Panc1 (cell line): ENCODE measurements at regions of chr6 and their contacts with region 1.

Region 1: DNA sequence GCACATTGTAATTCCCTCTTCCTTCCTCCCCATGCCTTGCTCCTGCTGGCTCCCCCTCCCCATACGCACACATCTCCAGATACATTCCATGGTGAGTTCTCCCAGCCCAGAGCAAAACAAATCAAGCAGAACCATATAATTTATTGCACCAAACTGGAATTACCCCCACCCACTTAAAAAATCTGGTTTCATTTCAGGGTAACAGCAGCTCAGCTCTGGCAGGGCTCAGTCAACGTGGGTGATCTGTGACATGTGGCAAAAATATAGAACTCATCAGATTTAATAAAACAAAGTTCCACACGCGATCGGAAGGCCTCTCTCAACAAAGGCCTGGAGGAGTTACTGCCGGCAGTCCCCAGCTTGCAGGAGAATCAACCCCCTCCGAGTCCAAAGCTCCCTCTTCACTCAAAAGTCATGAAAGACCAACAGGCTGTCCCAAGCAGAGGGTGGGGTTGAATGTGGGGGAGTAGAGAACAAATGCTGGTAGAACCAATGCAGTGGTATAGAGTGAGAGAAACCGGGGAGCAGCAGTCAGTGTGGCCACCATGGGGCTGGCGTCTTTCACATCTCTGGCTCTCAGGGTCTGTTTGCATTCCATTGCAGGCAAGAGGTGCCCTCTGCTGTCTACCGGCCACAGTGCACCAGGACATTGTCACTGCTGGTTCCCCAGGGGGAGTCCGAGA is 323.3 kb upstream of the NT5E start:
- DNase-seq: no peak
- ATAC-seq: peak; percentile 92
- H3K4me3 ChIP-seq: peak overlapping the region in 1 of 2 experiments; percentile 19; a peak in 1 of 4 replicates
- H3K27ac ChIP-seq: no peak overlapping the region
- H3K4me1 ChIP-seq: no peaks in the 10 kb centered on the region
- H3K27me3 ChIP-seq: no peaks in the 10 kb centered on the region; the same call in 1 of the 2 replicates
- CTCF ChIP-seq: peak; percentile 86

Region 2: GRCh38 chr6:84428300-84428907 is 698.2 kb before region 1 on chr6:
- CTCF ChIA-PET with region 1: no interaction called
- POLR2A ChIA-PET with region 1: no interaction called
- in situ Hi-C with region 1: no loop called
- intact Hi-C with region 1: loop called (anchors 10 kb)
- DNase-seq: peak; percentile 28
- ATAC-seq: no peak
- H3K4me3 ChIP-seq: no peak overlapping the region
- H3K27ac ChIP-seq: no peak overlapping the region
- H3K4me1 ChIP-seq: no peaks in the 10 kb centered on the region
- H3K27me3 ChIP-seq: no peaks in the 10 kb centered on the region; the same call in 1 of the 2 replicates
- CTCF ChIP-seq: peak; percentile 82